PC-3 (cell line): ENCODE measurements at regions of chr13 and their contacts with region 1.

Region 1: GRCh38 chr13:20174656-20175405 is 14.0 kb upstream of the GJA3 start:
- DNase-seq: peak; percentile 99
- ATAC-seq: peak; percentile 94
- H3K4me3 ChIP-seq: peak overlapping the region; percentile 22; the same call in 1 of the 2 replicates
- H3K27ac ChIP-seq: peak overlapping the region; percentile 72
- H3K4me1 ChIP-seq: peaks cover 30% of the 10 kb centered on the region
- H3K27me3 ChIP-seq: no peaks in the 10 kb centered on the region
- CTCF ChIP-seq: no peak

Region 2: DNA sequence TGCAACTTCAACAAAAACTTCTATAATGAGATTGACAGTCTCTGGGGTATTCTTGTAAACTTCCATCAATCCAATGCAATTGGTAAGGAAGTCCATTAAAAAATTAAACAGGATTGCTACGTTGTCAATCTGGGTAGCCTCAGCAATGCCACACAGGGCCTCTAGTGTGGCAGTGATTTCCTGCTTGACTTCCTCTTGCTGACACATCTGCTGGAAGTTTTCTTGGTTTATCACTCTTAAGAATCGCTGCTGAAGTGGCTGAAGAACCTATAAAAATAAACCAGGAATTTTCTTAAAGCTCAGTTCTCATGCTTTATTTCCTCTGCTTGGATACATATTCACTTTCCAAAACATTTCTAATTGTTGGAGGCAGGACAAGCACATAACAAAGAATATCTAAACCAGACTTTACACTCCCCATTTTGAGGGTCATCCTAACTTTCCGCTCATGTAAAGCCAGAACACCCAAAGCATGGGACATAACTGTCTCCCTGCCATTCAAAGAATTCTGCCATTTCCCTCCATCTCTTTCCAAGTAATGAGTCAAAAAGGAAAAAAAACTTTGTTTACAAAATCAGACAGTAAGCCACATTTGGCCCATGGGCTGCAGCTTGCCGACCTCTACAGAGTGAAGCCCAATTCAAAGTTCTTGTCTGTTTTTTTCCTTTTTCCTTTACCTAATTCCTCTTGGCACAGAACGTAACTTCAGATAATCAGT is 622.1 kb after region 1 on chr13:
- CTCF ChIA-PET with region 1: no interaction called
- POLR2A ChIA-PET with region 1: interaction called, 10 read pairs
- intact Hi-C with region 1: no loop called
- DNase-seq: peak; percentile 31
- ATAC-seq: peak; percentile 66
- H3K4me3 ChIP-seq: no peak overlapping the region
- H3K27ac ChIP-seq: no peak overlapping the region
- H3K4me1 ChIP-seq: peaks cover 18% of the 10 kb centered on the region; the same call in 1 of the 2 replicates
- H3K27me3 ChIP-seq: no peaks in the 10 kb centered on the region
- CTCF ChIP-seq: no peak